Posterior cingulate gyrus (tissue), 11 donors: ENCODE measurements at regions of chr20 and their contacts with region 1.

Region 1: DNA sequence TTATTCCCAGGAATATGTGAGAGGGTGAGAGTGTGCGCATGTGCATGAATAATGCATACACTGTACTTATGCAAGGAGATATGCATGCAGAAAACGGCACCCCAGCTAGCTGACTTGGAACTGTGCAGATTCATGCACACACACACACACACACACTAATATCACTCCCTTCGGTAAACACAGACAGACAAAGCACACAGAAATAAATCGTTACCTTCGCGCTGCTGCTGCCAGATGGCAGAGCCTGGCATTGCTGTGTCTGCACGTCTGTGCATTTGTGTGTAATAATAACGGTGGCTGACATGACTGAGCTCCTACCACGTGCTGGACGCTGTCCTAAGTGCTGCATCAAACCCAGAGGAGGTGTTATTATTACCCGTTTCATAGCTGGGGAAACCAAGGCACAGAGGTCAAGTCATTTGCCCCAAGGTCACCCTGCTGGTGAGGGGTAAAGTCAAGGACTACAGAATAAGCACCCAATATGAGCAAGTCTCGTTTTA is 36.7 kb downstream of the PREX1 start:
- DNase-seq: peak in 1 of 10 donors; percentile 82

Region 2: DNA sequence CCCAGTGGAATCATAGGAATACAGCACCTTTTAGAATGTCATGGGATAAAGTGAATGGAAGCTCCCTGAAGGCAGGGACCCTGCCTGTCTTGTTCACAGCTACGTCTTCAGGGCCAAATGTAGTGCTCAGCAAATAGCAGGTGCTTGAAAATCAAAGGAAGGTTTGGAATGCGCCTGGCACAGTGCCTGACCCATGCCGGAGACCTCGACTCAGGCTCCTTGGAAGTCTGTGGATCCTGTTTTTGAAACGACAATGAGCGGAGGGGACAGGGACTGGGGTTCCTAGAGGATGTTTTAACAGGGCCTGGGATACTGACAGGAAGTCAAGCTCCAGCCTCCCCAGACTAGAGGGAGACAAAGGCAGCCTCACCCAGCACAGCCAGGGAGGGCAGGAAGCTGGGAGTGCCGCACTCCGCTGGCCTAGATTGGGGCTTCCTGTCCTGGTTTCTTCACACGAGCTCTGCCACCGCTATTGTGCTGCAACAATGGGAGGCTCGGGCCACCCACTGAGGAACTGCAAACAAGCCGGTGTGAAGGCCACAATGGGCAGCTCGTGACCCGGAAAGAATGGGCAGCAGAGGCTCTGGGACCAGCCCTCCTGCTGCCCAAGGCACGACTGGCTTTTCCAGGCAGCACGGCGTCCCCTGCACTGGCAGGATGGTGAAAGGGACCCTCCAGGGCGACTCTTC is 40.0 kb before region 1 on chr20:
- intact Hi-C with region 1: loop called (anchors 5 kb)
- DNase-seq: peak; percentile 42 to 95 (median 68)